Activated CD4-positive, alpha-beta memory T cell treated with anti-CD3 and anti-CD28 coated beads, Interleukin-2, amount 10 ng/mL, durations not matched to agents 7 days and 5 days (primary cell): ENCODE measurements at regions of chr5 and their contacts with region 1.

Region 1: DNA sequence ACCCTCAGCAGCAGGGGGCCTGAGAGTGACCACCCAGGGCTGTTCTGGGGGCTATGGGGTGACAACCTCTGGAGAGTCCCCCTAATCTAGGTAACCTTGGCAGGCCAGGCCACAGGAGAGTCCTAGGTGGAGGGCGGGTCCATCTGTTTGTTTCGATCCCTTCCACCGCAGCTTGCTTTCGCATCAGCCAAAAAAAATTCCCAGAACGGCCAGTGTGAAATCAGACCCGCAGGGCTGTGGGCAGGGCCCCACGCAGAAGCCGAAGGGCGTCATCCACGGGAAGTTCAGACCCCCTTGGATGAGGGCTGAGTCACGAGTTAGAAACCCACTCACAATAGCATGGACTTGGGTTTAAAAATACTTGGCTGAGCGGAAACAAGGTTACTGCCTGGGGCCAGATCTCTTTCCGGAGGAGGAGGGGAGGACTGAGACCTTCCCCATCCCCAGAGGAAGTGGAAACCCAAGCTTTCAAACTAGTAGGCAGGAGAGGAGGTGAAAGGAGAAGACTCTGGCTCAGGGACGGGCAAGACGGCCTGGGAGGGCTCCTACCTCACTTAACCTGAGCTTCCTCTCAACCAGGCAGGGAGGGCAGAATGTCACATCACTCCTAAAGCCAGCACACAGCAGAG is 8.5 kb downstream of the STK10 start:
- DNase-seq: peak; percentile 61
- H3K4me3 Mint-ChIP-seq: peak overlapping the region; percentile 70
- H3K27ac Mint-ChIP-seq: peak overlapping the region; percentile 96
- H3K4me1 Mint-ChIP-seq: peaks cover 96% of the 10 kb centered on the region
- H3K27me3 Mint-ChIP-seq: no peaks in the 10 kb centered on the region

Region 2: DNA sequence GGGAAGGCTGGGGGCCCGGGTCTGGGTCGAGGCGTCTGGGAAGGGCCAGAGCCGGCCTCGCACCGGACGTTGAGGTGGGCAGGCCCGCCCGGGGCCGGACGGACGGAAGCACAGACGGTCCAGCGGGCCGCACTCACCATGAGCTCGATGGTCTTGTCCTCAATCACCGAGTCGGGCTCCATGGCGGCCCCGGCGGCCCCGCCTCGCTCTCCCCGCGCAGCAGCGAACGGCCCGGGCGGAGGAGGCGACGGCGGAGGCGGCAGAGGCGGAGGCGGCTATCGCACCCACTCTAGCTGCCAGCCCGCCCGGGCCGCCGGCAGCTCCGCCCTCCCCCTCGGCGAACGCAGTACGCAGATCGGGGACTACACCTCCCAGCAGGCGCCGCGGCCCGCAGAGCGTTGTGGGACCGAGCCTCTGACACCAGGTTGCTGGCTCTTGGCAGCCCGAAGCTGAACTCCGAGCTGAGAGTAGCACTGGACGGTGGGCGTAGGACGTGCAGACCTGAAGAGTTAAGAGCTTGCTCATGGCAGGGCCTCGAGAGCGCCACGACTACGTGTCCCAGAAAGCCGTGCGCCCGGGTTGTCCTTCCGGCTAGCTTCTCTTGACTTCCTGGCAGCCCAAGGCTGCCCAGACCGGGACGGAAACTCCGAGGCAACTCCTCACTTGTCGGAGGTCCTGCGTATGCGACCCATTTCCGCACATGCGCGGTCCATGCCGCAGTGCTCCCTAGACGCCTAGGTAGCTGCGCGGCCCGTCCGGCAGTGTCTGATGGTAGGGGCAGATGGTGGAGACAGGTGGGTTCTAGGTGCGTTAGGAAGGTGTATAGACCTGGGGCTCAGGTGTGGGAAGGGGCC is 172.9 kb before region 1 on chr5 and contains the start of gene FBXW11:
- CTCF ChIA-PET with region 1: interaction called, 15 read pairs
- POLR2A ChIA-PET with region 1: interaction called, 41 read pairs
- DNase-seq: peak; percentile 95
- H3K4me3 Mint-ChIP-seq: peak within 1 kb of the TSS; percentile 90
- H3K27ac Mint-ChIP-seq: peak within 1 kb of the TSS; percentile 94
- H3K4me1 Mint-ChIP-seq: peaks cover 50% of the 10 kb centered on the region
- H3K27me3 Mint-ChIP-seq: no peaks in the 10 kb centered on the region
- total RNA-seq, gene FBXW11: 37.4 to 38.8 TPM

Region 3: DNA sequence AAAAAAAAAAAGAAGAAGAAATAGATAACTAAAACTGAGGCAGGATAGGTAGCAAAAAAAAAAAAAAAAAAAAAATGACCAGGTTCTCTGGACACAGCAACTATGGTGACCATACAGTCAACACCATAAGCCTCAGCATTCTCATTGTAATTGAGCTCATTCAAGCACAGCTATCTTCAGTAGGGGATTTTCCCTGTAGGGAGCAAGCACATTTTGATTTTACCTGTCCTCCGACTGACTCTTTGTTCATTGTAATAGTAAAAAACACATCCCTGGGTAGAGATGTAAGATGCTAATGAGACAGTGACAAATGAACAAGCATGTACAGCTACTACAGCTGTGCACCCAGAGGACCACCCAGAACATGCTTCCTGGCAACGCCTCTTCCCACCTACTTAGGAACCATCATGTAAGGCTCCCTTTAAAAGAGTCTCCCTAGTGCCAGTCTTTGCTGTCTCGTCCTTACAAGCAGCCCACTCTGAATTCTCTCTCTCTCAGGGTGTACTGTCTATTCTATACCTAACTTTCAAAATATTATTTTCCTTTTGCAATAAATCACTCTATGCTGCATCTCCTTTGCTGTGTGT is 108.1 kb before region 1 on chr5:
- CTCF ChIA-PET with region 1: no interaction called
- POLR2A ChIA-PET with region 1: interaction called, 15 read pairs
- DNase-seq: no peak
- H3K4me3 Mint-ChIP-seq: no peak overlapping the region
- H3K27ac Mint-ChIP-seq: peak overlapping the region; percentile 44
- H3K4me1 Mint-ChIP-seq: peaks cover 53% of the 10 kb centered on the region
- H3K27me3 Mint-ChIP-seq: no peaks in the 10 kb centered on the region

Region 4: DNA sequence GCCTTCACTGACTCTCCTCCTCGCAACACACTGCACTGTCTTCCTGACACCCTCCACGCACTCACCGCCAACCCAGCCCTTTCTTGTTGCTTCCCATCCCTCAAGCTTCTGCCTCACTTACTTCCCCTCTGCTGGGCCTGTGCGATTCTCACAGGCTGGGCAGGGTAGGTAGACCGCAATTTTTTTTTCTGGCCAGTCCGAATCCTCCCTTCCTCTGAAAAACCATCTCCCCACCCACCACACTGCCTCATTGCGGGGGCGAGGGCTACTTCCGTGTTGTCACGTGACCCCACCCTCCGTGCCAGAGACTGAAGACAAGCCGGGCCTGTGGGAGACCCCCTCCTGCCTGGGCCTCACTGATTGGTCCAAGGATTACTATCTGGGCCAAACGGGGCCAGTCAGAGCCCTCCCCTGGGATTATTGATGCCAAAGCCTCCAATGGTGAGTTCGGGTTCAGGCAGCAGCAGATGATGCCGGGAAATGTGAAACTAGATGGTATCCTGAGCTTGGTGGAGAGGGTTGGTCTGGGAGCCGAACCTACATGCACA is 64.5 kb before region 1 on chr5:
- CTCF ChIA-PET with region 1: interaction called, 135 read pairs
- POLR2A ChIA-PET with region 1: interaction called, 905 read pairs
- DNase-seq: peak; percentile 92
- H3K4me3 Mint-ChIP-seq: peak overlapping the region; percentile 79
- H3K27ac Mint-ChIP-seq: peak overlapping the region; percentile 97
- H3K4me1 Mint-ChIP-seq: peaks cover 86% of the 10 kb centered on the region
- H3K27me3 Mint-ChIP-seq: no peaks in the 10 kb centered on the region

Region 5: GRCh38 chr5:172150514-172151425 is 28.7 kb before region 1 on chr5:
- CTCF ChIA-PET with region 1: interaction called, 5 read pairs
- POLR2A ChIA-PET with region 1: interaction called, 83 read pairs
- DNase-seq: peak; percentile 42
- H3K4me3 Mint-ChIP-seq: peak overlapping the region; percentile 46
- H3K27ac Mint-ChIP-seq: peak overlapping the region; percentile 85
- H3K4me1 Mint-ChIP-seq: peaks cover 76% of the 10 kb centered on the region
- H3K27me3 Mint-ChIP-seq: no peaks in the 10 kb centered on the region

Region 6: GRCh38 chr5:172216345-172216744 is 36.9 kb after region 1 on chr5:
- CTCF ChIA-PET with region 1: no interaction called
- POLR2A ChIA-PET with region 1: no interaction called
- DNase-seq: no peak
- H3K4me3 Mint-ChIP-seq: no peak overlapping the region
- H3K27ac Mint-ChIP-seq: no peak overlapping the region
- H3K4me1 Mint-ChIP-seq: peaks cover 3% of the 10 kb centered on the region
- H3K27me3 Mint-ChIP-seq: no peaks in the 10 kb centered on the region

Region 7: DNA sequence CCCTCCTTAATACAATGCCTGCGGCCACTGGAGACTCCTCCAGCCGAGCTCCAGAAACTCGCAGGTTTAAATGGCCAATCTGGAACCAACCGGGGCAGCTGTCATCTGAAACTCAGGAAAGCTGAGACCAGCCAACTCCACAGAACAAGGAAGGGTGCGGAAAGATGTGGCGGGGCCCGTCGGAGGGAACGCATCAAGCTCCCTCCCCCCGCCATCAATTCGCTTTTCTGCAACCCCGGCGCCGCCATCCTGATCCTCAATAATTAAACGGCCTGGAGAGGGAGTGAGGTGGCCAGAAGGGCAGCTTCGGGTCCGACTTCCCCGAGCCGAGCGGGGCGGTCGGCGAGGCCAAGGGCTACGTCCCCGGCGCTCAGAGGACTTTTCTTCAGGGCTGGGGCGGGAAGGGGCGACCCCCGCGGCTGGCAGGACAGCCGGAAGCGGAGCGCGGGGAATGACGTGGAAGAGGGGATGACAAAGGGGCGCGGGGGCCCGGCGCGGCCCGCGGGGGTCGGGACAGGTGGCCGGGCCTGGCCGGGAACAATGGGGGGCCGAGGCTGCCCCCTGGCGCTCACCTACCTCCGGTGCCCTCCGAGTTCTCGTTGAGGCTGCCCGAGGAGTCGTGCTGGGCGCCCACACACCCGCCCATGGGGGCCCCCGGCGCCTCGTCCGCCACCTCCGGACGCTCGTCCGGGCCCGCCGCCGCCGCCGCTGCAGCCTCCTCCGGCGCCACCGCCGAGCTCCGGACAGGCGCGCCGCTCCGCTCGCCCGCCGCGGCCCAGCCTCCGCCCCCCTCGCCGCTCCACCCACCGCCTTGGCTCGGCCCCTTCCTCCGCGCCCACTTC is 103.8 kb after region 1 on chr5 and contains the start of gene UBTD2:
- CTCF ChIA-PET with region 1: interaction called, 8 read pairs
- POLR2A ChIA-PET with region 1: interaction called, 32 read pairs
- DNase-seq: peak; percentile 79
- H3K4me3 Mint-ChIP-seq: peak within 1 kb of the TSS; percentile 84
- H3K27ac Mint-ChIP-seq: peak within 1 kb of the TSS; percentile 35
- H3K4me1 Mint-ChIP-seq: peaks cover 23% of the 10 kb centered on the region
- H3K27me3 Mint-ChIP-seq: peaks cover 11% of the 10 kb centered on the region
- total RNA-seq, gene UBTD2: 10.2 to 10.6 TPM

Region 8: DNA sequence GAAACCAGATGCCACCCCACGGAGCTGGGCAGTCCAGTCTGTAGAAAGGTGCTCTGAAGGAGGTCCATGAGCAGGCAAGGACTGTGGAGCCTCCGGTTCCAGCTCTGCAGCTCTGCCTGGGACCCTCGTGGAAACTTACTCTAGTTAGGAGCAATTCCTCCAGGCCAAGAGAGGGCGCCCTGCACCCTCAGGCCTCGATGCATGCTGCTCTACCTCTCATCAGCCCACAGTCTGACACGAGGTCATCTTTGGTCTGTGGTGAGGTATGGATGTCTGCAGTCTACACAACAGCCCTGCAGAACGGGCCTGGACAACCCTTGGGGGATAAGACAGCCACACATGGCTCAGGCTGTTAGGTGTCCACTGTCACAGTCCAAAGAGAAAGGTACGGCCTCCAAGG is 154.7 kb after region 1 on chr5:
- CTCF ChIA-PET with region 1: no interaction called
- POLR2A ChIA-PET with region 1: no interaction called
- DNase-seq: peak; percentile 17
- H3K4me3 Mint-ChIP-seq: no peak overlapping the region
- H3K27ac Mint-ChIP-seq: no peak overlapping the region
- H3K4me1 Mint-ChIP-seq: no peaks in the 10 kb centered on the region
- H3K27me3 Mint-ChIP-seq: no peaks in the 10 kb centered on the region